ENCODE measurements at regions of chr9 and their contacts with region 1.

Region 1: GRCh38 chr9:125758986-125759763 is 12.0 kb downstream of the PBX3 start:
- DNase-seq: peak; percentile 66
- H3K4me3 ChIP-seq: peak overlapping the region in 3 of 4 donors; percentile 33 to 41 (median 37)
- H3K27ac ChIP-seq: peak overlapping the region in 3 of 4 donors; percentile 43 to 98 (median 69)
- H3K4me1 ChIP-seq: peaks cover 0 to 100% (median 93%) of the 10 kb centered on the region in 4 donors
- H3K27me3 ChIP-seq: no peaks in the 10 kb centered on the region
- CTCF ChIP-seq: no peak
- EP300 ChIP-seq: no peak
- POLR2A ChIP-seq: no peak

Region 2: GRCh38 chr9:125803522-125803921 is 44.3 kb after region 1 on chr9:
- intact Hi-C with region 1: loop called (anchors 5 kb)
- DNase-seq: no peak
- H3K4me3 ChIP-seq: no peak overlapping the region
- H3K27ac ChIP-seq: peak overlapping the region in 2 of 4 donors; percentile 79
- H3K4me1 ChIP-seq: peaks cover 0 to 54% (median 41%) of the 10 kb centered on the region in 4 donors
- H3K27me3 ChIP-seq: no peaks in the 10 kb centered on the region
- CTCF ChIP-seq: no peak
- EP300 ChIP-seq: no peak
- POLR2A ChIP-seq: no peak

Region 3: GRCh38 chr9:125929846-125930245 is 170.7 kb after region 1 on chr9:
- intact Hi-C with region 1: no loop called
- DNase-seq: no peak
- H3K4me3 ChIP-seq: no peak overlapping the region
- H3K27ac ChIP-seq: no peak overlapping the region
- H3K4me1 ChIP-seq: peaks cover 0 to 24% (median 7%) of the 10 kb centered on the region in 4 donors
- H3K27me3 ChIP-seq: no peaks in the 10 kb centered on the region
- CTCF ChIP-seq: no peak
- EP300 ChIP-seq: no peak
- POLR2A ChIP-seq: no peak

Measured in sigmoid colon (tissue), 7 donors.